HEK293 (cell line): ENCODE measurements at regions of chr22 and their contacts with region 1.

Region 1: DNA sequence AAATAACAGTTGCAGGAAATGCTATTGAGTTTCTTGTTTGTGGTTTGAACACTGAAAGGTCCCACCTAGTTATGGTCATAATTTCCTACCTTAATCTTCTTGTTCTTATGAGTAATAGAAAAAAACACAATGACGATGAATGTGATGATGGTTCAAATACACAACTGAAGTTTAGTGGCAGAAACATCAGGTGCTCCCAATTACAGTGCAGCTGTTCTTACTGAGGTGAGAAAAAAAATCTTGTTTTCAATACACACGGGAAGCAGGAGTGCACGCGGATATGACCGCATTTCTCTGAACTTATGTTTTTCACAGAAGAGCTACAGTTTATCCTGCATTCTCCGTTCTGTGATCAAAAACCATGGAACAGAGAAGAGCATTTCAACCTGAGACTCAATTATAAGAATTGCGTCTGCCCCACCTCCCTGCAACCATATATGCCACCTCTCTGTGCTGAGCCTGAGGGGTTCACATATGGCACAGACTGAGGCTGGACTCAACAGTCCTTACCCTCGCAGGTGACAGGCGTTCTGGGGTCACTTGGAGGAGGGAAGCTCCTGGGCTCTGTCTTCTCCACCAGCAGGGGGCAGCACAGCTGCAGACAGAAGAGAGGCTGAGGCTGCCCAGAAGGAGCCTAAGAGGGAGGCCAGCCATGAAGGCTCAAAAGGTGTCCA is 99.7 kb upstream of the IGLL5 start:
- H3K4me3 ChIP-seq: no peak overlapping the region
- H3K27ac ChIP-seq: no peak overlapping the region
- H3K4me1 ChIP-seq: no peaks in the 10 kb centered on the region
- CTCF ChIP-seq: 0 out of 2 replicates have a peak, but pooled peaks have one; percentile 38

Region 2: DNA sequence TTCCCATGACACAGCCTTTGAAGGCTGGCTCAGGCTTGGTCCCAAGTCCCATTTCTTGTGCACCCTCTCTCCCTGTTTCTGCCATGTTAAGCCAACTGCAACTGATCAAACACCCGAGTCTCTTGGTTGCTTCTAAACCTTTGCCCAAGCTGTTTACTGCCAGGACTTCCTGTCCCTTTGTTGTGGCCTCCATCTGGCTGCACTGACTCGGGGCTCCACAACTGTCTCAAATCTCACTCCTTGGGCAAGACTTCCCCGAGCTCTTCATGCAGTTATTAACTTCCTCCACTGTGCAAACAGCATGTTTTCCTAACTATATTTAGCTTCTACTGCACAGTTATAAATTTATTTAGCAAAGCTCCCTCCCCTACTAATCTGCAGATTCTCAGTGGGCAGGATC is 539.0 kb before region 1 on chr22:
- CTCF ChIA-PET with region 1: no interaction called
- POLR2A ChIA-PET with region 1: no interaction called
- H3K4me3 ChIP-seq: no peak overlapping the region
- H3K27ac ChIP-seq: no peak overlapping the region
- H3K4me1 ChIP-seq: no peaks in the 10 kb centered on the region
- CTCF ChIP-seq: no peak

Region 3: DNA sequence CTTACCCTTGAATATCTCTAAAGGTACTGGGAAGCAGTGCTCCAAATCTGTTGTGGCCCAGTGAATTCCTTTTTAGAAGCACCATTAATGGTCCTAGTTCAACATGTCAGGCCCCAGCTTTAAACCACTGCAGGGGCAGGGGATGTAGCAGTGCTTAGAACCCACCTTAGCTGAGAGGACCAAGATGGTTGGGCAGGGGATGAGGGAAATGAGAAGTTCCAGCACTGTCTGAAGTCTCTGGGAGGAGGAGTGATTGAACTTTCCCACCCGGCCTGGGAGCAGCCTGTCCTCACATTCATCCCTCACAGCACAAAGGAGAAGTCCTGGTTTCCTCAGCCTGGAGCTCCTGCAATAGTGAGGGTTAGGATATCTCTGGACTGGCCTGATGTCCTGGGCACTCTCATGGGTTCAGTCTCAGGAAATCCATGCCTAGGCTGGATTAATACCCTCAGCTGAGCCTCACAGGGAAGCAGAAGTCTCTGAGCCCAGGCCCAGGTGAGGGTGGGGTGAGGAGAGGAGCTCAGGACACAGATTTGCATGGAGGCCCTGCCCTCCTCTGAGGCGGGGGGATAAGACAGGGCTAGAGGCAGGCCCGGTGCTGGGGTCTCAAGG is 200.2 kb before region 1 on chr22:
- CTCF ChIA-PET with region 1: interaction called, 11 read pairs
- POLR2A ChIA-PET with region 1: no interaction called
- H3K4me3 ChIP-seq: no peak overlapping the region
- H3K27ac ChIP-seq: no peak overlapping the region
- H3K4me1 ChIP-seq: no peaks in the 10 kb centered on the region
- CTCF ChIP-seq: no peak

Region 4: DNA sequence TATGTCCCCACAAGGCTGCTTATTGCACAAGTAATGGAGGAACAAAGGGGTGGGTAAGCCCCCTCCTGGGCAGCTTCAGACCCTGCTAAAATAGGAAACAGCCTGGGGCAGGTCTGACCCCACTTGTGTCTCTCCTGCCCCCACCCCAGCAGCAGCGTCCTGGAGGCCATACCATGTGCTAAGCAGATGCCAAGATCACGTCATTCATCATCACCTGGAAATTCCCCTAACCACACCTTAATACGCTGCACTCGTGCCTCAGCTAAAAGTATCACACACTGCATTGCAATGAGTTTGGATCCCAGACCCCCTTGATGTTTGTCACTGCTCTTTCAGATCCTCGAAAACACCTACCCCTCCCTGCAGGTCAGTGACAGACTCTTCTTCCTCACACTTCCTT is 171.3 kb before region 1 on chr22:
- CTCF ChIA-PET with region 1: no interaction called
- POLR2A ChIA-PET with region 1: no interaction called
- H3K4me3 ChIP-seq: no peak overlapping the region
- H3K27ac ChIP-seq: no peak overlapping the region
- H3K4me1 ChIP-seq: no peaks in the 10 kb centered on the region
- CTCF ChIP-seq: no peak

Region 5: DNA sequence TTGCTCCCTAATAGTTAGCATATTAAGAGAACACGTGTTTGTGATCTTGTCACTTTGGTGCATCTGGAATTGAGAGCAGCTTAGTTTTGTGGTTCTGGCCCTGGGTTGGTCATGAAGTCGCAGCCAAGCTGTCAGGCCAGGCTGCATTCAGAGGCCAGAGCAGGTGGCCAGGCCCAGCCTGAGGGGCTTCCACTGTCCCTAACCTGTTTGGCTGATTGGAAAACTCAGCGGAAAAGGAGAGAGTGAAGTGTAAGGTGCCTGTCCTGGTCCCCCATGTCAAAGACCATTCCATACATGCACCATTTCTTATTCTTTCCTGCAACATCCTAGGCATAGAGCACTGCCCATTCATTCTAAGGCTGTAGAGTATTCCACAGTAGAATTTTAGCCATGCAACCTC is 11.8 kb before region 1 on chr22:
- CTCF ChIA-PET with region 1: interaction called, 158 read pairs
- POLR2A ChIA-PET with region 1: no interaction called
- H3K4me3 ChIP-seq: no peak overlapping the region
- H3K27ac ChIP-seq: no peak overlapping the region
- H3K4me1 ChIP-seq: no peaks in the 10 kb centered on the region
- CTCF ChIP-seq: no peak

Region 6: DNA sequence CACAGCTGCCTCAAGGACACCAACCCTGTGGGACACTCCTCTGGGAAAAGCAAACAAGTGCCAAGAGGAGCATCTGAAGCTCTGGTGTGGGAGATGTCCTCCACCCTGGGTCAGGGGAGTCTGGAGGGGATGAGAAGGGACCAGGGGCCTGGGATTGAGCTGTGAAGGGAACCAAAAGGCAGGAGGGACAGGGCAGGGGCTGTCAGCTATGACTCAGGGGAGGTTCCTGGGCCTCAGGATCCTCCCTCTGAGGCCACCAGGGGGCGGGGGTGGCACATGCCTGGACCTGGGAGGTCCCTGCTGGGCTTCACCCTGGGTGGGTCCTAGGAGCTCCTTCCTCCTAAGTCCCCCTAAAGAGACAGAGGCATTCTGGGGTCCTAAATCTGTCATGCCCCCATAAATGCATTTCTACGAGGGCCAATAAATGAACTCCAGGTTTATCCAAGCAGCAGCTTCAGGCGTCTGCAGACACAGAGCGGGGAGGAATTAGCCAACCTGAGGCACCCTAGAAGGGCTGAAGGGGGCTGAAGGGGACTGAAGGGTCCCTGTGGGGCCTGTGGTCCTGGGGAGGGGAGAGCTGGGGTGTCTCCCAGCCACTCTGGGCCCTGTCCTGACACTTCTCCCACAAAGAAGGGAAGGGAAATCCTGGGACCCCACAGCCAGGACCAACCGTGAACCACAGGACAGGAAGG is 67.8 kb after region 1 on chr22:
- CTCF ChIA-PET with region 1: interaction called, 37 read pairs
- POLR2A ChIA-PET with region 1: no interaction called
- H3K4me3 ChIP-seq: no peak overlapping the region
- H3K27ac ChIP-seq: no peak overlapping the region
- H3K4me1 ChIP-seq: no peaks in the 10 kb centered on the region
- CTCF ChIP-seq: peak; percentile 77

Region 7: GRCh38 chr22:22913989-22914388 is 126.1 kb after region 1 on chr22:
- CTCF ChIA-PET with region 1: interaction called, 13 read pairs
- POLR2A ChIA-PET with region 1: no interaction called
- H3K4me3 ChIP-seq: no peak overlapping the region
- H3K27ac ChIP-seq: no peak overlapping the region
- H3K4me1 ChIP-seq: no peaks in the 10 kb centered on the region
- CTCF ChIP-seq: no peak